ENCODE measurements at regions of chr7 and their contacts with region 1.

Region 1: GRCh38 chr7:36315309-36316133 is 74.1 kb upstream of the ANLN start:
- H3K4me3 ChIP-seq: no peak overlapping the region
- H3K27ac ChIP-seq: no peak overlapping the region
- H3K4me1 ChIP-seq: no peaks in the 10 kb centered on the region
- CTCF ChIP-seq: no peak

Region 2: GRCh38 chr7:35849158-35849831 is 466.2 kb before region 1 on chr7:
- CTCF ChIA-PET with region 1: no interaction called
- POLR2A ChIA-PET with region 1: no interaction called
- H3K4me3 ChIP-seq: no peak overlapping the region
- H3K27ac ChIP-seq: no peak overlapping the region
- H3K4me1 ChIP-seq: peaks cover 6% of the 10 kb centered on the region
- CTCF ChIP-seq: no peak

Region 3: DNA sequence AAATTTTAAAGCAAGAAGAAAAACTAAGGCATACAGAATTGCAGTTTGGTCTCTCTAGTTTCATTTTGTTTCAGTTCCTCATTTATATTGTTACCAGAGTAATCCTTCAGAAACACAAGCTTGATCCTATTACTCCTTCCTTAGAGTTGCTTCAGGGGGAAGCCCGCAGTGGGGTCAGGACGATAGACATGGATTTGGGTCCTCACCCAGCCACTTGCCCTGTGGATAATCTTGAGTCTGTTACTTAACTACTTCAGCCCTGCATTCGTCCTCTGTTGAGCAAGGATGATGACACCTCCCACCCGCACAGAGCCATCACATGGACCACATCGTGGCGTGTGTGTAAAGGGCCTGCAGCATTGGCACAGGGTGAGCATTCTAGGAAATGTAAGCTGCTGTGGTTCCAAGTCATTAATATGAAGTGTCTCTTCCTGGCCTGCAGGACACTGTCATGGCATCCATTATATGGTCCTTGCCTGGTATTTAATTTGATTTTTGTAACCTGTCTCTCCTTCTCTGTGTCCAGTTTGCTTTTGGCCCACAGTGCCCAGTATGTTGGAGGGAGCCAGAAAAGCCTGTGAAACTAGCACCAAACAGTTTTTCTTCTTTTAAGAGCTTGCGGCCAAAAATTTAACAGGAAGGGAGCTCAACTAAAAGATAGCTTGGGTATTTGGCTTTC is 51.3 kb before region 1 on chr7:
- CTCF ChIA-PET with region 1: no interaction called
- POLR2A ChIA-PET with region 1: no interaction called
- H3K4me3 ChIP-seq: no peak overlapping the region
- H3K27ac ChIP-seq: no peak overlapping the region
- H3K4me1 ChIP-seq: no peaks in the 10 kb centered on the region
- CTCF ChIP-seq: no peak

Region 4: DNA sequence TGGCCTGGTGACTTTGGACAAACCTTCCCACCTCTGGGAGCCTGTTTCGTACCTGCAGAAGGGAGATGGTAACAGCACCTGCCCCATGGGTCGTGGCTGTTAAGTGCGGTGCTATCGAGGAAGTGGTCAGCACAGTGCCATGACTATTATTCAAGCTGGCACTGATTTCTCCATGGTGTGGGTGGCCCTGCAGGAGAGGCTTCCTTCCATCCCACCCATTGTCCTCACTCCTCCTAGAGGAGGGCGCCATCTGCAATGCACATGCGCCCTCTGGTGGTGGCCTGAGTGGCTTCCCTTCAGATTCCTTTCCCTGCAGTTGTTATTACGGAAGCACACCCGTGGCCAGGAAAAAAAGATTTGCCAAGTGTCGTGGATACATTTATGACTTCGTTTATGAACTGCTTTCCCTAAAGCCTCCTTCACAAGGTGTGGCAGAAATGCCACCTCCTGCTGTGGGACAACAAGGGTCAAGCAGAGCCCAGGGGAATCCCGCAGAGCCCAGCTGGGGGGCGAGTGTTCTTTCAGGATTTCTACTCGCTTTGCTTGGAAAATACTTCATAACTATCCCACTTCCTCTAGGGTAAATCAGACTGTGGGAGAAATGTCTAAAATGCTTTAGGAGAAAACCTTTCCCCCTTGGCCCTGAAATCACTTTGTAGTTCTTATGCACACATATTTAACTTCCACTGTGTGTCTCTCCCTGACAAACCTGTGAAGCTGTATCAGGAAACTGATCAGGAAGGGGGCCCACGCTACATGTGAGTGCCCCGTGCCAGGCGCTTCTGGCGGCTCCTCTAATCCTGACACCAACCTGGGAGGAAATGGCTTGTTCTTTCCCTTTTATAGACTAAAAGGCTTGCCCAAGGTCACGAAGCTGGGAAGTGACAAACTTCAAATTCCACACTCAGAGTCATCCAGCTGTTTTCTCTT is 23.9 kb before region 1 on chr7:
- CTCF ChIA-PET with region 1: interaction called, 10 read pairs
- POLR2A ChIA-PET with region 1: no interaction called
- H3K4me3 ChIP-seq: no peak overlapping the region
- H3K27ac ChIP-seq: no peak overlapping the region
- H3K4me1 ChIP-seq: no peaks in the 10 kb centered on the region
- CTCF ChIP-seq: peak; percentile 93

Region 5: GRCh38 chr7:36303202-36304098 is 12.1 kb before region 1 on chr7:
- CTCF ChIA-PET with region 1: interaction called, 50 read pairs
- POLR2A ChIA-PET with region 1: no interaction called
- H3K4me3 ChIP-seq: no peak overlapping the region
- H3K27ac ChIP-seq: peak overlapping the region; percentile 18; the same call in 1 of the 2 replicates
- H3K4me1 ChIP-seq: peaks cover 18% of the 10 kb centered on the region
- CTCF ChIP-seq: no peak